ENCODE measurements at regions of chr7 and their contacts with region 1.

Region 1: GRCh38 chr7:135645296-135645904 is 16.9 kb upstream of the STMP1 start:
- DNase-seq: no peak
- ATAC-seq: peak; percentile 83
- H3K4me3 ChIP-seq: no peak overlapping the region
- H3K27ac ChIP-seq: no peak overlapping the region
- H3K4me1 ChIP-seq: no peaks in the 10 kb centered on the region
- H3K27me3 ChIP-seq: no peaks in the 10 kb centered on the region
- CTCF ChIP-seq: peak; percentile 56 to 65 (median 62)
- EP300 ChIP-seq: no peak
- POLR2A ChIP-seq: no peak
- RAD21 ChIP-seq: peak; percentile 54

Region 2: DNA sequence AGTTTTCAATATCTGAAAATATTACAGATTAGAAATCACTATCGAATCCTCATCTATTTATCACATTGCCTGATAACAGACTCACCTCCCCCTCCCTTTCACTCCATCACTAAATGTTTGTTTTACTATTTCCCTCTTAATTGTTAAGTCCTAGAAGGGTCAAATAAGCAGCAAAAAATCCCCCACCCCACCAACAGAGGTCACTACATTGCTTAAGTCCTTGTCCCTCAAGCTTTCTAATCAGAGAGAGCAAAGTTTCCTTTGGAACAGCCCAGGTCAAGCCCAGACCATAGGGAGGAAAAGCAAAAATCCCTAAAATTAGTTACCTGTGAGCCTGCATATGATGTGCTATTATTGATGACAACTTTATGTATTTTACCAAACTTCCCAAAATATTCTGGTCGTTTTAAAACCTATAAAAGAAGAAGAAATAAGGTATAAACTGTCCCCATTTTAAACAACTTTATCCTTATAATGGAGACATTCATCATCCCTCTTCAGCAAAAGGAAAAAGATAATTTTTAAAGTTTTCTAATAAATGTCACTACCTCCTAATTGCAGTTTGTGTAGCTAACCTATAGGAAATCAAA is 230.5 kb before region 1 on chr7:
- CTCF ChIA-PET with region 1: interaction called, 11 read pairs
- POLR2A ChIA-PET with region 1: no interaction called
- RAD21 ChIA-PET with region 1: no interaction called
- SMC1A ChIA-PET with region 1: interaction called, 4 read pairs
- in situ Hi-C with region 1: no loop called
- intact Hi-C with region 1: loop called (anchors 10 kb)
- DNase-seq: no peak
- ATAC-seq: peak; percentile 80
- H3K4me3 ChIP-seq: no peak overlapping the region
- H3K27ac ChIP-seq: no peak overlapping the region
- H3K4me1 ChIP-seq: no peaks in the 10 kb centered on the region
- H3K27me3 ChIP-seq: no peaks in the 10 kb centered on the region
- CTCF ChIP-seq: peak; percentile 55 to 59 (median 58); a peak in 5 of 6 replicates
- EP300 ChIP-seq: no peak
- POLR2A ChIP-seq: no peak
- RAD21 ChIP-seq: peak; percentile 58

Region 3: DNA sequence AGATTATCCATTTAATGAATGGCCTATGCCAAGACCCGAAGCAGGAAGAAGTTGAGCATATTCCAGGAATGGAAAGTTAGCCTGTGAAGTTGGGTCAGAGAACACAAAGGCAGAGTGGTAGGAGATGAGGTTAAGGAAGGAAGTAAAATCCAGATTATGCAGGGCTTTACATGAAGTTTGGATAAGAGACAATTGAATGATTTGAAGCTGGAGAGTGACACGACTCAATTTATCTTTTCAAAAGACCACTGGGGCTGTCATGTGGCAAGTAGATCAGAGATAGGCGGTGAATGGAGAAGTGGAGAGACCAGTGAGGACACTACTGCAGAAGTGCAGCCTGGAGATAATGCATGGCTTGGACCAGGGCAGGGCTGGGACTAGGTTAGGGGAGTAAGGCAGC is 128.3 kb before region 1 on chr7:
- CTCF ChIA-PET with region 1: interaction called, 15 read pairs
- POLR2A ChIA-PET with region 1: no interaction called
- RAD21 ChIA-PET with region 1: interaction called, 3 read pairs
- SMC1A ChIA-PET with region 1: interaction called, 5 read pairs
- in situ Hi-C with region 1: no loop called
- intact Hi-C with region 1: no loop called
- DNase-seq: no peak
- ATAC-seq: no peak
- H3K4me3 ChIP-seq: no peak overlapping the region
- H3K27ac ChIP-seq: no peak overlapping the region
- H3K4me1 ChIP-seq: no peaks in the 10 kb centered on the region
- H3K27me3 ChIP-seq: no peaks in the 10 kb centered on the region
- CTCF ChIP-seq: no peak
- EP300 ChIP-seq: no peak
- POLR2A ChIP-seq: no peak
- RAD21 ChIP-seq: no peak

Region 4: DNA sequence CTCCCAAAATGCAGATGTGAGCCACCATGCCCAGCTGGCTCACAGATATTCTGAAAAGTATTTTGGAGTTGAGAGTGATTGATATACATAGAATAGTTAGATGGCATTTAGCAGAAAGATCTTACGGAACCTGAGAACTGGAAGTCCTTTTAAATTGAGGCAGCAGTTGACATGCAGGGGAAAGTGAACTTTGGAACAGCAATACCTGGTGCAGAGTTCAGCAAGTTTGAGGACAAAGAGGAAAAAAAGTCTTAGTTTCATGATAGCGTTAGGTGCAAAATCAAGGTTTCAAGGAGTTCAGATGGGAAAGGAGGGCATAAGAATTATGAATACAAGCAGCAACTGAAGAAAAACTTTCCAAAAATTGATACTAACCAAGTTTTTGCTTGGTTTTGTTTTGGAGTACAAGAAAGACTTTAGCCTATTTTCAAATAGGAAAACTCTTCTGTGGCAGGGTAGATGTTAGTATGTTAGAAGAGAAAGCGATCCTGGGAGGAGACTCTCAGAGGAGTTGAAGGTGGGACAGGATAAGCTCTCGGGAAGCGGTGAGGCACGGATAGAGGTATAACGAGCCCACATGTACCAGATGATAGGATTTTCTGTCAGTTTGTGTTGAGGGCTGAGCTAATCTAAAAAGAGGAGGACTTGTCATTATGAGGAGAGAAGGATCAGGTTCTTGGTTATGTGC is 11.1 kb before region 1 on chr7:
- CTCF ChIA-PET with region 1: interaction called, 64 read pairs
- POLR2A ChIA-PET with region 1: no interaction called
- RAD21 ChIA-PET with region 1: interaction called, 4 read pairs
- SMC1A ChIA-PET with region 1: interaction called, 5 read pairs
- in situ Hi-C with region 1: no loop called
- intact Hi-C with region 1: no loop called
- DNase-seq: no peak
- ATAC-seq: no peak
- H3K4me3 ChIP-seq: no peak overlapping the region
- H3K27ac ChIP-seq: no peak overlapping the region
- H3K4me1 ChIP-seq: no peaks in the 10 kb centered on the region
- H3K27me3 ChIP-seq: no peaks in the 10 kb centered on the region
- CTCF ChIP-seq: no peak
- EP300 ChIP-seq: no peak
- POLR2A ChIP-seq: no peak
- RAD21 ChIP-seq: no peak

Region 5: DNA sequence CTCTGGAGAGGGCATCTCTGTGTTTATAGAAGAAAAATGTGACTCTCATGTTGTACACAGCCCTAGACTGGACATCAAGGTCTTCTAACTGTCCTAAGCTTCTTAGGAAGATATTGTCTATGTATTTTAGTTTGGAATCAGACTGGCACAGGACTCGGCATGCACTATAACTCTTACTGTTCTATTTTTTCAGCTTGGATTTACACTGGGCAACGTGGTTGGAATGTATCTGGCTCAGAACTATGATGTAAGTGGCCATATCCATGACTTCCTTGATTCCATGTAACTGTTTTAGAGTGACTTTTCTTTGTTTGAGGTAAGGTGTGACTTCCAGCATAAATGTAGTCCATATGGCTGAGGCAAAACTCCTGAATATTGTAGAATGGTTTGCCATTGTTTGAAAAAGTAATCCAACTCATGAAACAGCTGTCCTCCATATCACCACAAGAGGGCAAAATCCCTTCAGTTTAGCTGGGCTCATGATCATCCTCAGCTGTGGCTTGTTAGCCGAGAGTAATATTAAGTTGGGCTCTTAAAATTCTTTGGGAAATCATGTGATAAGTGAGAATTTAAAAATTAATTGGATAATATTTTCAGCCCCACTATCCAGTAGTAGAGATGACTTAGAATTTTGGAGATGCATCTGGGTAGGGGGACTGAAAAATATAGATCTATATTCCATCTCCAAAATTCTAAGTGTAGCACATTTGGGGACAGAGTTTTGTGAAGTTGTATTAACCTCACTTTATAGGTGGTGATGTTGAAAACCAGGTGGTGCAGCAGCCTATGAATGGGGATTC is 27.4 kb after region 1 on chr7:
- CTCF ChIA-PET with region 1: interaction called, 11 read pairs
- POLR2A ChIA-PET with region 1: no interaction called
- RAD21 ChIA-PET with region 1: no interaction called
- SMC1A ChIA-PET with region 1: interaction called, 6 read pairs
- in situ Hi-C with region 1: no loop called
- intact Hi-C with region 1: no loop called
- DNase-seq: no peak
- ATAC-seq: peak; percentile 91
- H3K4me3 ChIP-seq: no peak overlapping the region
- H3K27ac ChIP-seq: no peak overlapping the region
- H3K4me1 ChIP-seq: no peaks in the 10 kb centered on the region; the same call in 1 of the 2 replicates
- H3K27me3 ChIP-seq: no peaks in the 10 kb centered on the region
- CTCF ChIP-seq: peak; percentile 65 to 82 (median 68)
- EP300 ChIP-seq: no peak
- POLR2A ChIP-seq: no peak
- RAD21 ChIP-seq: peak; percentile 71

Region 6: DNA sequence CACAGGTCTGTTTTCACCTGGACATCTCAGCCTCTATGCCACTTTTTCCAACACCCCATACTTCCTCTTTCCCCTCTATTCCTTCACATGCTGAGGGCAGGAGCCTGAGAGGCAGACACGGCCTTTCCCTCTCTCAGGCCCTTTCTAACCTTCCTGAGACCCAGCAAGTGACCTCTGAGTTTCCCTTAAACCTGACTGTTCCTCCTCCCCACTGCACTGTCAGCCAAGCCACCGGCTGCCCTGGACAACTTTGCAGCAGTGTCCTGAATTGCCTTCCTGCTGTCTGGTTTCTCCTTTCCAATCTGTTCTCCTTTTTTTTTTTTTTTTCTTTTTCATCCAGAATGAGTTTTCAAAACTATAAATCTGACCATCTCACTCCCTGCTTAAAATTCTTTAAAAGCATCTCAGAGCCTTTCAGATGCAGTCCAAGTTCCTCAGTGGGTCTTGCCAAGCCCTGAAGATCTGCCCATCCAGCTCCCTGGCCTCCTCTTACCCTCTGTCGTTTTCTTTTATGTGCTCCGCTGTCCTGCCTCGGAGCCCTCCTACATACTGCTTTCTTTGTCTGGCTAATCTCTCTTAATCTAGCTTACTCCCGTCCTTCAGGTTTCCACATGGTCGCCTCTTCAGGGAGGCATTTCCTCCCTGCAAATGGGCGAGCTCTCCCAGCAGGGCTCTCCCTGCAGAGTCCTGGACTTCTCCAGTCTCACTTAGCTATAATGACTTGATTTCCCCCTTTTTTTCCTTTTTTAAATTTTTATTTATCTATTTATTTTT is 52.1 kb after region 1 on chr7:
- CTCF ChIA-PET with region 1: no interaction called
- POLR2A ChIA-PET with region 1: no interaction called
- RAD21 ChIA-PET with region 1: no interaction called
- SMC1A ChIA-PET with region 1: no interaction called
- in situ Hi-C with region 1: no loop called
- intact Hi-C with region 1: no loop called
- DNase-seq: no peak
- ATAC-seq: no peak
- H3K4me3 ChIP-seq: no peak overlapping the region
- H3K27ac ChIP-seq: no peak overlapping the region
- H3K4me1 ChIP-seq: no peaks in the 10 kb centered on the region
- H3K27me3 ChIP-seq: no peaks in the 10 kb centered on the region
- CTCF ChIP-seq: no peak
- EP300 ChIP-seq: no peak
- POLR2A ChIP-seq: no peak
- RAD21 ChIP-seq: no peak